ENCODE measurements at regions of chr14 and their contacts with region 1.

Region 1: GRCh38 chr14:106511006-106511799 is 984.8 kb downstream of the TMEM121 start:
- DNase-seq: peak; percentile 70
- H3K4me3 Mint-ChIP-seq: no peak overlapping the region
- H3K27ac Mint-ChIP-seq: peak overlapping the region; percentile 29
- H3K4me1 Mint-ChIP-seq: peaks cover 72% of the 10 kb centered on the region
- H3K27me3 Mint-ChIP-seq: no peaks in the 10 kb centered on the region

Region 2: DNA sequence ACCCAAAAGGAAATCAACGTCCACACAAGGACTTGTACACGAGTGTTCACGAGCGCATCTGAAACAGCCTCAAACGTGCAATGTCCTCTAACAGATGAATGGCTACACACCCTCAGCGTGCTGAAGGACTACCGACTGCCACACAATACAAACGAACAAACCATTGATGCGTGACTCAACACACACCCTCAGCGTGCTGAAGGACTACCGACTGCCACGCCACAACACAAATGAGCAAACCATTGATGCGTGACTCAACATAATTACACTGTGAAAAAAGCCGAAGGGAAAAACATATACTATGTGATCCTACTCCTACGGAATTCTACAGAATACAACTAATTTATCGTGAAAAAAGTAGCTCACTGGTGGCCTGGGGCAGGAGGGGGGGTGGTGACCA is 1287.9 kb before region 1 on chr14:
- CTCF ChIA-PET with region 1: no interaction called
- POLR2A ChIA-PET with region 1: no interaction called
- intact Hi-C with region 1: no loop called
- DNase-seq: no peak
- H3K4me3 Mint-ChIP-seq: no peak overlapping the region
- H3K27ac Mint-ChIP-seq: no peak overlapping the region
- H3K4me1 Mint-ChIP-seq: no peaks in the 10 kb centered on the region
- H3K27me3 Mint-ChIP-seq: no peaks in the 10 kb centered on the region

Region 3: GRCh38 chr14:106395456-106396050 is 115.7 kb before region 1 on chr14:
- CTCF ChIA-PET with region 1: no interaction called
- POLR2A ChIA-PET with region 1: no interaction called
- intact Hi-C with region 1: loop called (anchors 1 kb)
- DNase-seq: peak; percentile 61
- H3K4me3 Mint-ChIP-seq: peak overlapping the region; percentile 52
- H3K27ac Mint-ChIP-seq: peak overlapping the region; percentile 81
- H3K4me1 Mint-ChIP-seq: peaks cover 44% of the 10 kb centered on the region
- H3K27me3 Mint-ChIP-seq: peaks cover 9% of the 10 kb centered on the region

Region 4: GRCh38 chr14:106459971-106460730 is 51.1 kb before region 1 on chr14:
- CTCF ChIA-PET with region 1: interaction called, 14 read pairs
- POLR2A ChIA-PET with region 1: no interaction called
- intact Hi-C with region 1: no loop called
- DNase-seq: peak; percentile 82
- H3K4me3 Mint-ChIP-seq: no peak overlapping the region
- H3K27ac Mint-ChIP-seq: peak overlapping the region; percentile 18
- H3K4me1 Mint-ChIP-seq: peaks cover 5% of the 10 kb centered on the region
- H3K27me3 Mint-ChIP-seq: peaks cover 12% of the 10 kb centered on the region

Region 5: GRCh38 chr14:106491851-106492250 is 19.4 kb before region 1 on chr14:
- CTCF ChIA-PET with region 1: interaction called, 48 read pairs
- POLR2A ChIA-PET with region 1: interaction called, 13 read pairs
- intact Hi-C with region 1: loop called (anchors 1 kb)
- DNase-seq: peak; percentile 50
- H3K4me3 Mint-ChIP-seq: no peak overlapping the region
- H3K27ac Mint-ChIP-seq: no peak overlapping the region
- H3K4me1 Mint-ChIP-seq: peaks cover 21% of the 10 kb centered on the region
- H3K27me3 Mint-ChIP-seq: no peaks in the 10 kb centered on the region

Region 6: DNA sequence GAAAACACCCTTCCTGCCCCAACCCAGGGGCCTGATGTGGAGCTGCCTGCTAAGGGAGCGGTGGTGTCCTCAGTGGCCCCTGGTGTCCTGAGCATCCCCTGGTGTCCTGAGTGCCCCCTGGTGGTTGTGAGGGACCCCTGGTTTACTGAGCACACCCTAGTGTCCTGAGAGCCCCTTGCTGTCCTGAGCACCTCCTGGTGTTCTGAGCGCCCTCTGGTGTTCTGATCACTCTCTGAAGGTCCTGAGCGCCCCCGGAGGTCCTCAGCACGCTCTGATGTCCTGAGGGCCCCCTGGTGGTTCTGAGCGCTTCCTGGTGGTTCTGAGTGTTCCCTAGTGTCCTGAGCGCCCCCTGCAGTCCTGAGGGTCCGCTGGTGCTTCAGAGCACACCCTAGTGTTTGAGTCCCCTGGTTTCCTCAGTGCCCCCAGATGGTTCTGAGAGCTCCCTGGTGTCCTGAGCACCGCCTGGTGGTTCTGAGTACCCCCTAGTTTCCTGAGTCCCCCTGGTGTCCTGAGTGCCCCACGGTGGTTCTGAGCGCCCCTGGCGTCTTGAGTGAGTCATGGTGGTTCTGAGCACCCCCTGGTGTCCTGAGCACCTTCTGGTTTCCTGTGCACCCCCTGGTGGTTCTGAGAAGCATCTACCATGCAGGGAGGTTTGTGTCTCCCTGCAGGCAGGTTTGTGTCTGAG is 19.4 kb after region 1 on chr14:
- CTCF ChIA-PET with region 1: interaction called, 48 read pairs
- POLR2A ChIA-PET with region 1: no interaction called
- intact Hi-C with region 1: no loop called
- DNase-seq: peak; percentile 55
- H3K4me3 Mint-ChIP-seq: no peak overlapping the region
- H3K27ac Mint-ChIP-seq: no peak overlapping the region
- H3K4me1 Mint-ChIP-seq: no peaks in the 10 kb centered on the region
- H3K27me3 Mint-ChIP-seq: peaks cover 27% of the 10 kb centered on the region